Activated naive CD4-positive, alpha-beta T cell treated with anti-CD3 and anti-CD28 coated beads for 36 hours (primary cell): ENCODE measurements at regions of chr1 and their contacts with region 1.

Region 1: DNA sequence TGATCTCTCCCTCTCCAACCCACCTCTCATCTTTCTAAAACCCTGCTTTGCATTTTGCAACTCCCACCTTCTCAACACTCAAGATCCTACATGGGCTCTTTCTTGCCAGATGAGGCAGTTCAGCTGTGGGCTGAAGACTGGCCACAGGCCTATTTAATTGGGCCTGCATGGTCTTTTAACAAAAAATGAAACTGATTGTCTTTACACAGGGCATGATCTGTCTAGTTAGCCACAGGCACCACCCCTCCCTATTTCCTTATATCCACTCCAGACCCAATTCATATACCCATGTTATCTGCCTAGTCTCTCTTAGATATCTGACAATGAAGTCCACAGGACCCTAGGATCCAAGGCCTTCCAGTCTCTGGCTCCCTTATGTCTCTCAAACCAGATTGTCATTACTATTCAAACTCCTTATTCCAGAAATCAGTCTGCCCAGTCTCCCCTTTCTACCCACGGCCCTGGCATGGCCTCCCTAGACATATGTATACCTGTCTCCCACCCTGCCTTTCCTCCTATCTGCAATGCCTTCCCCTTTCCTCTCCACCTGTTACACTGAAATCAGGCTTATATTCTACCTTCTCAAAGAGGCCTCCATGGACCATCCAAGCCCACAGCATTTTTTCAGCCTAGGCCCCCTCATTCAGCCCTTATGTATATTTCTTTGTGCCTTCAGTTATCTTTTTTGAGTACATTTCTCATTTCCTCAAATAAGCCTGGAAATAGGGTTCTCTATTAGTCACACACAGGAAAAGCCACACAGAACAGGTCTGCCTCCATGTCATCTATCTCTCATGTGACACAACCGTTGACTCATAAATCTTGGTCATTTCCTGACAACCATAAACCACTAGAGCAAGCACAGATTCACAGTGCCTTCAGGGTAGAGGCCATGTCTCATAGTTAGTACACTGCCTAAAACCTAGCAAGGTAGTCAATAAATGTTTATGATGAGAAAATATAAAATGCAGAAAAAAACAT is 39.0 kb downstream of the LPAR3 start:
- DNase-seq: peak; percentile 64
- H3K4me3 Mint-ChIP-seq: no peak overlapping the region
- H3K27ac Mint-ChIP-seq: peak overlapping the region; percentile 80
- H3K4me1 Mint-ChIP-seq: peaks cover 35% of the 10 kb centered on the region
- H3K27me3 Mint-ChIP-seq: no peaks in the 10 kb centered on the region

Region 2: GRCh38 chr1:83508485-83509151 is 1345.4 kb before region 1 on chr1:
- CTCF ChIA-PET with region 1: no interaction called
- intact Hi-C with region 1: loop called (anchors 10 kb)
- DNase-seq: peak; percentile 68
- H3K4me3 Mint-ChIP-seq: peak overlapping the region; percentile 46
- H3K27ac Mint-ChIP-seq: peak overlapping the region; percentile 91
- H3K4me1 Mint-ChIP-seq: peaks cover 46% of the 10 kb centered on the region
- H3K27me3 Mint-ChIP-seq: no peaks in the 10 kb centered on the region

Region 3: GRCh38 chr1:84298328-84298683 is 555.7 kb before region 1 on chr1:
- CTCF ChIA-PET with region 1: no interaction called
- intact Hi-C with region 1: loop called (anchors 5 kb)
- DNase-seq: peak; percentile 54
- H3K4me3 Mint-ChIP-seq: peak overlapping the region; percentile 81
- H3K27ac Mint-ChIP-seq: peak overlapping the region; percentile 28
- H3K4me1 Mint-ChIP-seq: peaks cover 35% of the 10 kb centered on the region
- H3K27me3 Mint-ChIP-seq: no peaks in the 10 kb centered on the region

Region 4: DNA sequence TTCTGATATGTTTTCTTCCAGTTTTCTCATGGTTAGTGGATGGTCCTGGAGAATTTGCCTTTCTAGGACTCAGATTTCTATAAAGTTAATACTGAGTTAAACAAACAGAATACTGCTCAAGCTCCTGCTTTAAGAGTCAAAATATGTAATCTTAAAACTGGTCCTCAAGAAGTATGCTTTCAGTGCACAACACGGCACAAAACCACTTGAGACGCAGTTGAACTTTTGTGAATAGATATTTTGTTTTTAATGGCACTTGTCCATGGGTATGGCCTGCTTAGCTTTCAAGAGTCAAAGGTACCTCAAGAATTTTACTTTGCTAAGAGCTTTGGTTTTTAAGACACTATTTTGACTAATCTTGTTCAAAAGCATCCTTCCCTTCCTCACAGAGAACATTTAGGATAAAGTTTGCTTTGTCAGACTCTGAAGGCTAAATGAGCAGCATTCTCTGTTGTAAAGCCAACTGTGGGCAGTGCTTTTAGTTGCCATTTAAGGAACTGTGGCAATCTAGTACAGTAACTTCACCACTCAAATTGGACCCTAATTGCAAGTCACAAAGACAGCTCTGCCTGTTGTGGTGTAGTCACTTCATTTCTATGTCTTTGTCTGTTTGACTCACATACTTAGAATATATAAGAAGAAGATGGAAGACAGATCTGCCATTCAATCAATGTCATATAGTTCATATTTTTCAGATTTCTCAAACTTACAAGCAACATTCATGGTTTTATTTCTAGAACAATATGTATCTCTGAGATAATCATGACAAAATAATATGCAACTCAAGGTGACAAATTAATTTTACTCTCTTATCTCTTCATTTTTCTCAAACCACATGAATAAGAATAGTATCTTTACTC is 523.7 kb before region 1 on chr1:
- CTCF ChIA-PET with region 1: no interaction called
- intact Hi-C with region 1: no loop called
- DNase-seq: no peak
- H3K4me3 Mint-ChIP-seq: no peak overlapping the region
- H3K27ac Mint-ChIP-seq: no peak overlapping the region
- H3K4me1 Mint-ChIP-seq: peaks cover 8% of the 10 kb centered on the region
- H3K27me3 Mint-ChIP-seq: no peaks in the 10 kb centered on the region

Region 5: GRCh38 chr1:84573967-84574842 is 279.8 kb before region 1 on chr1 and contains the start of gene CTBS:
- CTCF ChIA-PET with region 1: no interaction called
- intact Hi-C with region 1: loop called (anchors 2 kb)
- DNase-seq: peak; percentile 86
- H3K4me3 Mint-ChIP-seq: peak within 1 kb of the TSS; percentile 95
- H3K27ac Mint-ChIP-seq: peak within 1 kb of the TSS; percentile 98
- H3K4me1 Mint-ChIP-seq: peaks cover 28% of the 10 kb centered on the region
- H3K27me3 Mint-ChIP-seq: no peaks in the 10 kb centered on the region
- total RNA-seq, gene CTBS: 21.1 to 21.2 TPM

Region 6: GRCh38 chr1:85042413-85042812 is 188.4 kb after region 1 on chr1:
- CTCF ChIA-PET with region 1: no interaction called
- intact Hi-C with region 1: no loop called
- DNase-seq: no peak
- H3K4me3 Mint-ChIP-seq: no peak overlapping the region
- H3K27ac Mint-ChIP-seq: no peak overlapping the region
- H3K4me1 Mint-ChIP-seq: peaks cover 2% of the 10 kb centered on the region
- H3K27me3 Mint-ChIP-seq: peaks cover 23% of the 10 kb centered on the region

Region 7: DNA sequence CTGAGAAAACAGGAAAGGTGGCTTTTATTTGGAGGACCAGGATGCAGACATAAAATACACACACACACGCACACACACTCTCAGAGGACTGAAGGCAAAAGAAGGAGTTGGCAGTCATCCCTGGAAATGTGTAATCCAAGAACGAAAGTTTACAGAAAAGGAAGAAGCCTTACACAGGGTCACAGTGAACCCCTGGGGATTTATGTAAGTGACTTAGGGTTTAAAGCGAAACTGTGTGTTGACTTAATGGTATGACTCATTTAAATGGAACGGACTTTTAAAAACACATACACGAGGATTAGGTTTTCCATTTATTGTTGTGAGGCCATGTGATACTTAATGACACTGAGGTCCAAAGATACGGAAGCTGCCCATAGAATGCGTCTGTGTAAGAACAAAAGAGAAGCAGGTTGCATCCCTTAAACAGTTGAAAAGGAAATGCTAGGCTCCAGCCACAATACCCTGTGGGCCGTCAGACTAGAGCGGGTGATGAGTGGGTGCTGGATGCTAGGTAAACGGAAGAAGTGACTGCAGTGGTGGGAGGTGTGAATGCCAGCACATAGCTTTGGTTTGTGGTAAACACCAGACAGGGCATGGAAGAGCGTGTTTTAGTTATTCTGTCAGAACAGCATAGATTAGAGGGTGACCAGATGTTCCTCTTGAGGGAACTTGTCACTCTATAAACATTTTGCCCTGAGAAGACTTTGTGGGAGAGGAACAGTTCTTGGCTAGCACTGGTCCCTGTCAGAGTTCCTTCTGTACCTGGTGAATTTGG is 444.0 kb after region 1 on chr1:
- CTCF ChIA-PET with region 1: no interaction called
- intact Hi-C with region 1: loop called (anchors 1 kb)
- DNase-seq: peak; percentile 83
- H3K4me3 Mint-ChIP-seq: peak overlapping the region; percentile 8
- H3K27ac Mint-ChIP-seq: peak overlapping the region; percentile 28
- H3K4me1 Mint-ChIP-seq: peaks cover 19% of the 10 kb centered on the region
- H3K27me3 Mint-ChIP-seq: peaks cover 8% of the 10 kb centered on the region